ENCODE measurements at regions of chr17 and their contacts with region 1.

Region 1: GRCh38 chr17:9072696-9073339 is 51.5 kb downstream of the NTN1 start:
- DNase-seq: peak in 1 of 2 experiments; percentile 38
- H3K4me3 ChIP-seq: no peak overlapping the region
- H3K27ac ChIP-seq: no peak overlapping the region
- H3K4me1 ChIP-seq: peaks cover 6% of the 10 kb centered on the region; the same call in 1 of the 2 replicates
- H3K27me3 ChIP-seq: no peaks in the 10 kb centered on the region
- CTCF ChIP-seq: no peak

Region 2: GRCh38 chr17:8745586-8746500 is 327.0 kb before region 1 on chr17:
- CTCF ChIA-PET with region 1: no interaction called
- POLR2A ChIA-PET with region 1: no interaction called
- intact Hi-C with region 1: no loop called
- DNase-seq: peak in 1 of 2 experiments; percentile 59
- H3K4me3 ChIP-seq: peak overlapping the region; percentile 31; the same call in 1 of the 2 replicates
- H3K27ac ChIP-seq: no peak overlapping the region
- H3K4me1 ChIP-seq: no peaks in the 10 kb centered on the region
- H3K27me3 ChIP-seq: peaks cover 18% of the 10 kb centered on the region
- CTCF ChIP-seq: peak; percentile 76

Region 3: DNA sequence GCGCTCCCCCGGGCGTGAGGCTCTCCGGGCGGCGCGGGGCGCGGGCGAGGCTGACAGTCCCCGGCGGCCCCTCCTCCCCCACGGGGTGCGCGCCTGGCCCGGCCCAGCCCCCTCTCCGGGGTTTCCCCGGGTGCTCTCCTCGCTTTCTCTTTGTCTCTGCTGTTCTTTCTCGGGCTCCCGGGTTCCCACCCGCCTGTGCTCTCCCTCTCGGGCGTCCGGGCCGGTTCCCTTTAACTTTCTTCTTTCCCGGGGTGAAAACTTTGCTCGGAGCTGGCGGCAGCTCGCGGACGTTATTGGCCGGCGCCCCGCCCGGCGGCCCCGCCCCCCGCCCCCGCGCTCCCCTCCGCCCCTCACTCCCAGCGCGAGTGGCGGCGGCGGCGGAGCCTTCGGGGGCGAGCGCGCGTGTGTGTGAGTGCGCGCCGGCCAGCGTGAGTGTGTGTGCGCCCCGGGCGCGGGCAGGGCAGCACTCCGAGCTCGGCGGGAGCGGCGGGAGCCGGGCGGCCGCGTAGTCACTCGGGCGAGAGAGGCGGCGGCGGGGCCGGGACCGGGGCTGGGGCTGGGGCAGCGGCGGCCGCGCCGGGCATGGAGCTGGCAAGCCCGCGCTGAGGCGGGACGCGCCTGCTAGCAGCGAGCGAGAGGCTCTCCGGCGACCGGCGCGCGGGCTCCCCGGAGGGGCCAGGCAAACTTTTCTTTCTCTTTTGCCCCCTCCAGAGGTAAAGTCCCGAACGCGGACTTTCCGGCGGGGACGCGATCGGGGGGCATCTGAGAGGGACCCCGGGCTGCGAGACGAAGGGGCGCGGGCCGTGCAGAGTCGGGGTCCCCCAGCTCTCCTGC is 51.4 kb before region 1 on chr17 and contains the start of gene NTN1:
- CTCF ChIA-PET with region 1: no interaction called
- POLR2A ChIA-PET with region 1: interaction called, 3 read pairs
- intact Hi-C with region 1: loop called (anchors 5 kb)
- DNase-seq: peak in 1 of 2 experiments; percentile 76
- H3K4me3 ChIP-seq: peak within 1 kb of the TSS; percentile 55; the same call in 1 of the 2 replicates
- H3K27ac ChIP-seq: no peak within 1 kb of the TSS
- H3K4me1 ChIP-seq: peaks cover 17% of the 10 kb centered on the region
- H3K27me3 ChIP-seq: no peaks in the 10 kb centered on the region
- CTCF ChIP-seq: no peak
- total RNA-seq, gene NTN1: 17.7 and 24.5 TPM in 2 replicates

Region 4: GRCh38 chr17:9050801-9051401 is 21.9 kb before region 1 on chr17:
- CTCF ChIA-PET with region 1: no interaction called
- POLR2A ChIA-PET with region 1: interaction called, 3 read pairs
- intact Hi-C with region 1: loop called (anchors 1 kb)
- DNase-seq: peak; percentile 80 to 90
- H3K4me3 ChIP-seq: peak overlapping the region; percentile 47; the same call in 1 of the 2 replicates
- H3K27ac ChIP-seq: peak overlapping the region; percentile 85
- H3K4me1 ChIP-seq: peaks cover 31% of the 10 kb centered on the region
- H3K27me3 ChIP-seq: no peaks in the 10 kb centered on the region
- CTCF ChIP-seq: no peak

Region 5: GRCh38 chr17:9195961-9196716 is 123.3 kb after region 1 on chr17:
- CTCF ChIA-PET with region 1: no interaction called
- POLR2A ChIA-PET with region 1: no interaction called
- intact Hi-C with region 1: loop called (anchors 5 kb)
- DNase-seq: peak; percentile 62 to 83
- H3K4me3 ChIP-seq: no peak overlapping the region
- H3K27ac ChIP-seq: no peak overlapping the region
- H3K4me1 ChIP-seq: peaks cover 14% of the 10 kb centered on the region
- H3K27me3 ChIP-seq: no peaks in the 10 kb centered on the region
- CTCF ChIP-seq: no peak

Measured in PC-9 (cell line).